ENCODE measurements at regions of chr13 and their contacts with region 1.

Region 1: GRCh38 chr13:29105777-29106176 is 285.6 kb downstream of the MTUS2 start:
- DNase-seq: peak; percentile 36
- ATAC-seq: peak; percentile 80
- H3K4me3 Mint-ChIP-seq: no peak overlapping the region
- H3K27ac Mint-ChIP-seq: no peak overlapping the region
- H3K4me1 Mint-ChIP-seq: no peaks in the 10 kb centered on the region; the same call in 1 of the 2 replicates
- H3K27me3 Mint-ChIP-seq: no peaks in the 10 kb centered on the region
- CTCF ChIP-seq: peak; percentile 57

Region 2: DNA sequence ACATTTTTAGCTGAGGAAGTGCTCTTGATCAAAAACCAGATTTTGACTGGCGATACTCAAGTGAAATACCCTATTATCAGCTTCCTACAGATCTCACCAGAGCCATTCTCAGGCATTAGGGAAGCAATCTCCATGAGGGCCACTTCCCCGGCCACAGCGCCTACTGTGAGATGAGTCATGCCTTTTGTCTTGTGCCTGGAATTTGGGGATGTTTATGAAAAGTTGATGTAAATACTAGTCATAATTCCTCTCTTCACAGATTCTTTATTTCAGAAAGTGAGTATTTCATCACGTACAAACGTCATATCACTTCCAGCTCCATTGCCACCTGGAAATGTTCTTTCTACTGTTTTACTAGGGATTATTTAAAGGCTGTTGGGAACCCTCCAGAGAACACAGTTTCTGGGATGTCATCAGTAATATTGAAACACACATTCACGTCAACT is 361.7 kb before region 1 on chr13:
- CTCF ChIA-PET with region 1: no interaction called
- POLR2A ChIA-PET with region 1: no interaction called
- DNase-seq: no peak
- ATAC-seq: peak; percentile 73
- H3K4me3 Mint-ChIP-seq: no peak overlapping the region
- H3K27ac Mint-ChIP-seq: peak overlapping the region; percentile 92
- H3K4me1 Mint-ChIP-seq: peaks cover 39% of the 10 kb centered on the region
- H3K27me3 Mint-ChIP-seq: no peaks in the 10 kb centered on the region
- CTCF ChIP-seq: no peak

Region 3: DNA sequence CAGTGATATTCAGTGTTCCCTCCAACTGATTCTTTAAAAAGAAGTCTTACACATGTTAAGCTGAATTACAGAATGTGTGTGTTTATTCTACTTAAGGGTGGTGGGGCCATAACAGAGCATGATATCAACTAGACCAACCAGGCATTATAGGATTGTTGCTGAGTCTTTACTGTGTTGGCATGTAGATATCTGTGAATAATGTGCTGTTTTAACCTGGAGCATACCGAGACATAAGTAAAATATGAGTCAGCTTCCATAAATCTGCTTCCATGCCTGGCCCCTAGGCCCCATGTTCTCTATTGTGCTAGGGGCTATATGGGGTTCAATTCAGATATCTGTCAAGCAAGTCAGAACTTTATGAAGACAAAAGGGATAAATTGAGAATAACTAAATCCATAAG is 10.1 kb after region 1 on chr13:
- CTCF ChIA-PET with region 1: interaction called, 11 read pairs
- POLR2A ChIA-PET with region 1: no interaction called
- DNase-seq: no peak
- ATAC-seq: no peak
- H3K4me3 Mint-ChIP-seq: no peak overlapping the region
- H3K27ac Mint-ChIP-seq: no peak overlapping the region
- H3K4me1 Mint-ChIP-seq: no peaks in the 10 kb centered on the region
- H3K27me3 Mint-ChIP-seq: no peaks in the 10 kb centered on the region
- CTCF ChIP-seq: no peak

Region 4: GRCh38 chr13:29125191-29125933 is 19.6 kb after region 1 on chr13:
- CTCF ChIA-PET with region 1: interaction called, 13 read pairs
- POLR2A ChIA-PET with region 1: interaction called, 3 read pairs
- DNase-seq: no peak
- ATAC-seq: peak; percentile 18; the same call in 1 of the 2 replicates
- H3K4me3 Mint-ChIP-seq: no peak overlapping the region
- H3K27ac Mint-ChIP-seq: no peak overlapping the region
- H3K4me1 Mint-ChIP-seq: peaks cover 13% of the 10 kb centered on the region
- H3K27me3 Mint-ChIP-seq: no peaks in the 10 kb centered on the region
- CTCF ChIP-seq: no peak

Measured in WTC11 (cell line).